ENCODE measurements at regions of chr3 and their contacts with region 1.

Region 1: GRCh38 chr3:125437631-125438435 is 62.7 kb upstream of the ZNF148 start:
- DNase-seq: peak; percentile 45 to 60 (median 51)
- H3K4me3 ChIP-seq: no peak overlapping the region
- H3K4me3 Mint-ChIP-seq: no peak overlapping the region
- H3K27ac ChIP-seq: no peak overlapping the region
- H3K27ac Mint-ChIP-seq: no peak overlapping the region
- H3K4me1 ChIP-seq: no peaks in the 10 kb centered on the region
- H3K4me1 Mint-ChIP-seq: peaks cover 0 to 3% (median 3%) of the 10 kb centered on the region in 4 donors
- H3K27me3 ChIP-seq: no peaks in the 10 kb centered on the region
- H3K27me3 Mint-ChIP-seq: no peaks in the 10 kb centered on the region

Region 2: GRCh38 chr3:124928333-124929202 is 509.3 kb before region 1 on chr3:
- CTCF ChIA-PET with region 1: interaction called, 23 read pairs
- POLR2A ChIA-PET with region 1: interaction called, 5 read pairs
- intact Hi-C with region 1: loop called (anchors 1 kb)
- DNase-seq: peak; percentile 42 to 59 (median 50)
- H3K4me3 ChIP-seq: no peak overlapping the region
- H3K4me3 Mint-ChIP-seq: peak overlapping the region in 1 of 8 donors; percentile 23
- H3K27ac ChIP-seq: no peak overlapping the region
- H3K27ac Mint-ChIP-seq: peak overlapping the region in 1 of 7 donors; percentile 9
- H3K4me1 ChIP-seq: no peaks in the 10 kb centered on the region
- H3K4me1 Mint-ChIP-seq: peaks cover 0 to 2% (median 0%) of the 10 kb centered on the region in 4 donors
- H3K27me3 ChIP-seq: no peaks in the 10 kb centered on the region
- H3K27me3 Mint-ChIP-seq: peaks cover 7 to 9% of the 10 kb centered on the region in 2 donors

Region 3: DNA sequence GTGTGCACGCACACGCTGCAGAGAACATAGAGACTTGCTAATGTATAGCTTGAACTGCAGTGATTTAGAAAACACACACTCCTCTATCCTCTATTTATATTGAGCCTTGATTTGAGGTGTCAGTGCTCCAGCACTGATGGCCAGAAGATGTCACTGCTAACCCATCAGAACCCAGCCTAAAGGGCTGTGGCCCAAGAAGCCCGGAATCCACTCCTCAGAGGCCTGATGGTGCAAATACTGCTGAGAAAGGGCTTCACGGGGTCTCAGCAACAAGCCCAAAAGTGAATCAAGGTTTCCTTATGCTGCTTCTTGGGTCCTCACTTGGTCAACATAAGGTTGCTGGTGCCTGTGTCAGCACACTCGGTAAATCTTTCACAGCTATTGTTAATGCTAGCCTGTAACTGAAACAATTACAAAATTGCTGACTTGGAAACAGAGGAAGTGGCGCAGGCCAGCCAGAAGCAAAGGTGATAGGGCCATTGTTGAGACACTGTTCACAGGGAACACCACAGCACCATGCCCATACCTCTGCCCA is 442.3 kb before region 1 on chr3:
- CTCF ChIA-PET with region 1: interaction called, 99 read pairs
- POLR2A ChIA-PET with region 1: no interaction called
- intact Hi-C with region 1: no loop called
- DNase-seq: peak in 4 of 5 donors; percentile 42 to 48 (median 48)
- H3K4me3 ChIP-seq: no peak overlapping the region
- H3K4me3 Mint-ChIP-seq: no peak overlapping the region
- H3K27ac ChIP-seq: no peak overlapping the region
- H3K27ac Mint-ChIP-seq: peak overlapping the region in 2 of 7 donors; percentile 12 to 37
- H3K4me1 ChIP-seq: no peaks in the 10 kb centered on the region
- H3K4me1 Mint-ChIP-seq: peaks cover 0 to 5% (median under 1%) of the 10 kb centered on the region in 4 donors
- H3K27me3 ChIP-seq: no peaks in the 10 kb centered on the region
- H3K27me3 Mint-ChIP-seq: no peaks in the 10 kb centered on the region

Region 4: DNA sequence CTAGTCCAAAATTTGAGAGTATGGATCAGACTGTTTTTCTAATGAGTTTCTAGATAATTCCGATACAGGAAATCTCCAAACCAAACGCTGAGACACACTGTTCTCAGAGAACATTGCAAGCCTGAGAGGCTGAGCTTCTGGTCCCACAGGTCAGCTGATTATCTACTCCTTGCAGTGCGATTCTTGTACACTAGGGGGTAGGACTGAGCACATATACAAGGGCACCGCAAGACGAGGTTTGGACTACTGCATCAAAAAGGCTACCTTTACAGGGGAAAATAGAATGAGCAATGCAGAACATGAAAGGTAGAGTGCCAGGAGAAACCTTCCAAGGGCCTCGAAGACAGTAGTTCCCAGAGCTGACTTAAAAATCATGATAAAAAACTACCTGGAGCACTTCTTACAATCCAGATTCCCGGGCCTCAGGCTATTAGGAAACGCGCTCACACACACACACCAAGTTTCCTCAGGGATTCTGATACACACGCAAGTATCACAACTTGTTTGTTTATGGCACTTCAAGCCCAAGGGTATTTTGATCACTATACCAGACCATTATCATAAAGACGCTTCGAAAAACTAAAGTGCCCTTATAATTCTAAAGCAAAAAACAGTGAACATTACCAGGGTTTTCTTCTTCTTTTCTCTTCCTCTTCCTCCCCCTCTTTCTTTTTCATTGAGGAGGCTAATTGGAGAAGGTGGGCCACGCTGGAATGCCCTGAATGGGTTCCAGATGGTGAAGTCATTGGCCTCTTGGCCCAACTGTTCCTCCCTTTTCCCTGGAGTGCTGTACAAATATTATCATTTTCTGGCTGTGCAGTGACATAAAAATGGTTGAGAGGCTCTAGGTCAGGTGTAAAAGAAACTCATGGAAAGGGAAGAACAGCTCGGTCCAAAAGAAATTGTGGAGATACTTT is 287.1 kb before region 1 on chr3:
- CTCF ChIA-PET with region 1: interaction called, 8 read pairs
- POLR2A ChIA-PET with region 1: no interaction called
- intact Hi-C with region 1: loop called (anchors 1 kb)
- DNase-seq: peak in 4 of 5 donors; percentile 34 to 57 (median 46)
- H3K4me3 ChIP-seq: no peak overlapping the region
- H3K4me3 Mint-ChIP-seq: no peak overlapping the region
- H3K27ac ChIP-seq: no peak overlapping the region
- H3K27ac Mint-ChIP-seq: no peak overlapping the region
- H3K4me1 ChIP-seq: peaks cover 7% of the 10 kb centered on the region
- H3K4me1 Mint-ChIP-seq: peaks cover 7 to 13% (median 9%) of the 10 kb centered on the region in 4 donors
- H3K27me3 ChIP-seq: no peaks in the 10 kb centered on the region
- H3K27me3 Mint-ChIP-seq: no peaks in the 10 kb centered on the region

Region 5: DNA sequence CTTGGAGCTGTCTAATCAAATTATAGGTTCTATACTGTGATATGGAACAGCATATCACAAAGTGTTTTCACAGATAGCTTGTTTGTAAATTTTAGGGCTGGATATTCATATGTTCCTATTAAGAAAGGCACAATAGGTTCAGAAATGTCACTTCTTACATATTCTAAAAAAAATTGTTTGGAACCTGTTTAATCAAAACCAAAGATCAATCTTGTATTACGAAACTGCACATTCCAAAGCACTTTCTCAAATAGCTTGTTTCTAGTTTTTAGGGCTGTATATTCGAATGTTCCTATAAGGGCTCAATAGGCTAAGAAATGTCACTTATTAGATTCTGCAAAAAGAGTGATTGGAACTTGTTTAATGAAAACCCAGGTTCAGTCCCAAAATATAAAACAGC is 224.8 kb after region 1 on chr3:
- CTCF ChIA-PET with region 1: no interaction called
- POLR2A ChIA-PET with region 1: no interaction called
- intact Hi-C with region 1: no loop called
- DNase-seq: no peak
- H3K4me3 ChIP-seq: no peak overlapping the region
- H3K4me3 Mint-ChIP-seq: no peak overlapping the region
- H3K27ac ChIP-seq: no peak overlapping the region
- H3K27ac Mint-ChIP-seq: no peak overlapping the region
- H3K4me1 ChIP-seq: no peaks in the 10 kb centered on the region
- H3K4me1 Mint-ChIP-seq: no peaks in the 10 kb centered on the region
- H3K27me3 ChIP-seq: no peaks in the 10 kb centered on the region
- H3K27me3 Mint-ChIP-seq: no peaks in the 10 kb centered on the region

Measured in CD4-positive, alpha-beta memory T cell (primary cell).